ENCODE measurements at regions of chr20 and their contacts with region 1.

Region 1: DNA sequence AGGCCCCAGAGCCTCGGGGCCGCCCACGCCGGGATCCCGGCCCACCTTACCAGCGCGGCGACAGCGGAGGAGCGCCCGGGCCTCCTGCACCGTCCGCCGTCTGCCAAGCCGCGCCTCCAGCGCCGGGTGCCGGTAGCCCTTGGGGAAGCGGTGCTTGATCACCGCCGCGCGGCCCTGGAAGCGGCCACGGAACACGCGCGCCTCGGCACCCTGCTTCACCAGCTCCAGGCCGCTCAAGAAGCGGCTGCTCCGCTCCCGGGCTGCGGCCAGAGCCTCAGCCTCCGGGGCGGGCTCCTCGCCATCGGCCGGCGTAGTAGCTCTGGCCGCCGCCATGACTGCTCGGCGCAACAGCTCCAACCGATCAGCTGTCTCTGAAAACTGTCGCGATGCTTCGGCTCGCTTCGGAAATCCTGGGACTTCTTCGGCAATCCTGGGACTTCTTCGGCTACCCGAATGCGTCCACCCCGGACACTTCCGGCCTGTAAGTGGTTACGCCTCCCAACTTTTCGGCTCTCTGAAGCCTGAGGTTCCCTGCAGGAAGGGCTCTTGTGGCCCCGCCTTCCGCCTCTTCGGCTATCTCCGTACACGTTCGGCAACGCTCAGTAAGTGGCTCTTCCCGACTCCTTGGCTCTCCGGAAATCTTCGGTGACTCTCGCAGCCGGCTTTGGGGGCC is at the start of gene TP53RK:
- DNase-seq: peak; percentile 100
- ATAC-seq: peak; percentile 99
- total RNA-seq, gene TP53RK: 10.4 TPM

Region 2: DNA sequence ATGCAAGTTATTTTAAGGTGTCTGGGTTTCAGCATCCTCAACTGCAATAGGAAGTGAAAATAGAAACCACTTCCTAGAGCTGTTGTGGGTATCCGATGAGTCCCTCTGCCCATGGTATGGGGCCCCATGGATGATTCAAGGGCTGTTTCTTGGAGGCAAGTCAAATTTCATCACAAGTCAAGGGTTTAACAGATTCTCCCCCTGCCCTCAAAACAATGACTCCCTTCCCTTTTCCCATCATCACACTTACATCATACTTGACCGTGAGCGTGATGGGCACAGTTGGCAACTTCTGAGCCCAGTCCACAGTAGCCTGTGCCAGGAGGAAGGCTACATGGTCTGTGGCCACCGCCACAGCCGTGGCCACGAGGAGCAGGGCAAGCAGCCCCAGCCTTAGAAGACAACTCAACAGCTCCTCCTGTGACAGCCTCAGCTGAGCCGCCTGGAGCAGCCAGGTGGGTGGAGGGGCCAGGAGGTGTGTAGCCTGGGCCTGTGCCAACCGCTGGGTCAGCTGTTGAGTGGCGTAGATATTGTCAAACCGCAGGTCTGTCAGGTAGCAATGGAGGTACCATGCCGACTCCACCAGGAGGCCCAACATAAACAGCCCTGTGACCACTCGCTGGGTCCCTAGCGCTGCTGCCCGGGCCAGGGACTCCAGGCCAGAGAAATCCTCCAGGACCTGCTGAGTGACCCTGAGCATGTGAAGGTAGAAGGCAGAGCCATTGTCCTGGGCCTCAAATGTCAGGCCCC is 144.0 kb before region 1 on chr20:
- intact Hi-C with region 1: loop called (anchors 10 kb)
- DNase-seq: no peak
- ATAC-seq: peak; percentile 44

Measured in sciatic nerve (tissue), 2 donors.